Left lung (tissue), 14 donors: ENCODE measurements at regions of chr6 and their contacts with region 1.

Region 1: GRCh38 chr6:134640975-134641429 is 308.9 kb downstream of the ALDH8A1 start:
- DNase-seq: peak in 3 of 4 donors; percentile 28 to 72 (median 65)
- ATAC-seq: peak; percentile 93
- H3K4me3 ChIP-seq: no peak overlapping the region
- H3K27ac ChIP-seq: peak overlapping the region in 1 of 2 donors; percentile 45
- H3K4me1 ChIP-seq: peaks cover 0 to 9% of the 10 kb centered on the region in 2 donors
- H3K27me3 ChIP-seq: no peaks in the 10 kb centered on the region
- CTCF ChIP-seq: peak; percentile 90 to 96

Region 2: GRCh38 chr6:134517145-134517658 is 123.8 kb before region 1 on chr6:
- intact Hi-C with region 1: loop called in 1 of 2 experiments (anchors 10 kb)
- DNase-seq: peak; percentile 60 to 87 (median 83)
- ATAC-seq: peak; percentile 90
- H3K4me3 ChIP-seq: no peak overlapping the region
- H3K27ac ChIP-seq: peak overlapping the region; percentile 73 to 79
- H3K4me1 ChIP-seq: peaks cover 25 to 50% of the 10 kb centered on the region in 2 donors
- H3K27me3 ChIP-seq: no peaks in the 10 kb centered on the region
- CTCF ChIP-seq: no peak

Region 3: GRCh38 chr6:134822920-134823709 is 182.1 kb after region 1 on chr6:
- intact Hi-C with region 1: loop called in 1 of 2 experiments (anchors 10 kb)
- DNase-seq: peak in 2 of 4 donors; percentile 66 to 80
- ATAC-seq: peak; percentile 95
- H3K4me3 ChIP-seq: no peak overlapping the region
- H3K27ac ChIP-seq: peak overlapping the region in 1 of 2 donors; percentile 8
- H3K4me1 ChIP-seq: peaks cover 3 to 8% of the 10 kb centered on the region in 2 donors
- H3K27me3 ChIP-seq: no peaks in the 10 kb centered on the region
- CTCF ChIP-seq: peak; percentile 76 to 90